Activated CD4-positive, alpha-beta T cell treated with anti-CD3 and anti-CD28 coated beads, Interleukin-2, amount 10 ng/mL, durations not matched to agents 7 days and 5 days (primary cell): ENCODE measurements at regions of chr12 and their contacts with region 1.

Region 1: GRCh38 chr12:6851921-6852650 is at the start of gene USP5:
- DNase-seq: peak; percentile 99
- H3K4me3 Mint-ChIP-seq: peak within 1 kb of the TSS; percentile 84
- H3K27ac Mint-ChIP-seq: peak within 1 kb of the TSS; percentile 100
- H3K4me1 Mint-ChIP-seq: peaks cover 48% of the 10 kb centered on the region
- H3K27me3 Mint-ChIP-seq: no peaks in the 10 kb centered on the region
- total RNA-seq, gene USP5: 119 to 131 TPM

Region 2: DNA sequence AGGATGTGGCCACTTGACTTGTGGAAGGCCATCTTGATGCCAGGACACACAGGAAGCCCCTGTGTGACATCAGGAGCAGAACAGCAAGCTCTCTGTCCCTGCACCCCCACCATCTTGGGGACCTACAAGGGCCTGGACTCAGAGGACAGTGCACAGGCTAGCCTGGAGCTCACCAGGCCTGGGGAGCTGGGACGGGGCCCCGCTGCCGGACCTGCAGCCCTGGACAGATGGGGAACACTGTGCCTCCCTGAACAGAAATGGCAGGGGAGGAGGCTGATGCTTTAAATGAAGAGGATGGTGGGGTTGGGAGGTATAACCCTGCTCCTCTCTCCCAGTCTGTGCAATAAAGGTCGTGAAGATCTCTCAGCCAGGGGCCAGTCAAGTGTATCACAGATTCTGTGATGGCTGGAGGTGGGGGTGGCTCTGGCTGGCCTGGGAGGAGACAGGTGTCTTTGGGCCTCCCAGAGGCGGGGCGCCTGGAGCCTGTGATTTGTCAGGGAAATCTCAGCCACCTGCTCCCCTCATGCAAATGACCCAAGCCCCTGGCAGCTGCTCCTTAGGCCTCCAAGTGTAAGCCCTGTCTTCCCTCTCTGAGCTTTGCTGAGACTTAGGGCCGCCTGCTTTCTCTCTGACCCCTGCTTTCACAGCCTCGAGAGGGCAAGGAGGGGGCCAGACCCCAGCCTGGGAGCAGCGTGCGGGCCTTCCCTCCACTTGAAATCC is 12.4 kb before region 1 on chr12:
- CTCF ChIA-PET with region 1: interaction called, 24 read pairs
- POLR2A ChIA-PET with region 1: interaction called, 3 read pairs
- DNase-seq: no peak
- H3K4me3 Mint-ChIP-seq: no peak overlapping the region
- H3K27ac Mint-ChIP-seq: no peak overlapping the region
- H3K4me1 Mint-ChIP-seq: peaks cover 5% of the 10 kb centered on the region
- H3K27me3 Mint-ChIP-seq: no peaks in the 10 kb centered on the region

Region 3: DNA sequence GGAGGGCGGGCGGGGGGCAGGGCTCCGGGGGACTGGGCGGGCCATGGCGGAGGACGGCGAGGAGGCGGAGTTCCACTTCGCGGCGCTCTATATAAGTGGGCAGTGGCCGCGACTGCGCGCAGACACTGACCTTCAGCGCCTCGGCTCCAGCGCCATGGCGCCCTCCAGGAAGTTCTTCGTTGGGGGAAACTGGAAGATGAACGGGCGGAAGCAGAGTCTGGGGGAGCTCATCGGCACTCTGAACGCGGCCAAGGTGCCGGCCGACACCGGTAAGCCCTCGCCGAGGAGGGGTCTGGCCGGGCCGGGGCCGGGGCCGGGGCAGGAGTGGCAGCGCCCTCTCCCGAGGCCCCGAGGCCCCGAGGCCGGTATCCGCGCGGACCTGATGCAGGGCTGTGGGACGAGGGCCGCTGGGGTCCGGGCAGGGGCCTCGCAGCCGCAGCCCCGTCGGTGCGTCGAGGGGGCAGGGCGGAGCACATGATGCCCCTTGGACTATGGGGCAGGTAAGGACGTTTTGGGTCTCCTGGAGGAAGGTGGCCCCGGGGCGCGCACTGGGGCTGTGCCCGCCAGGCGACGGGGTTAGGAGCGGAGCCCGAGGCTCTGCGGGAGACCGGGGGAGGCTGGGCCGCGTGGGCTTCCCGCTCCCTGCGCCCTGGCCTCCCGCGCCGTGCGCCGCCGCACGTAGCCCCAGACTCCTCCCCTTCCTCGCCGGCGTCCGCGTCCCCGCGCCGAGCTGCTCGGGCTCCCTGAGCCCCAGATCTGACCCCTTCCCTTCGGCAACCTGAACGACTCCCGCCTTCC is 15.5 kb after region 1 on chr12 and contains the start of gene TPI1:
- CTCF ChIA-PET with region 1: interaction called, 67 read pairs
- POLR2A ChIA-PET with region 1: interaction called, 23 read pairs
- DNase-seq: peak; percentile 76
- H3K4me3 Mint-ChIP-seq: peak within 1 kb of the TSS; percentile 93
- H3K27ac Mint-ChIP-seq: peak within 1 kb of the TSS; percentile 95
- H3K4me1 Mint-ChIP-seq: peaks cover 52% of the 10 kb centered on the region
- H3K27me3 Mint-ChIP-seq: no peaks in the 10 kb centered on the region
- total RNA-seq, gene TPI1: 918 to 1,035 TPM

Region 4: GRCh38 chr12:6937481-6938297 is 85.6 kb after region 1 on chr12:
- CTCF ChIA-PET with region 1: interaction called, 11 read pairs
- POLR2A ChIA-PET with region 1: no interaction called
- DNase-seq: peak; percentile 95
- H3K4me3 Mint-ChIP-seq: peak overlapping the region; percentile 81
- H3K27ac Mint-ChIP-seq: peak overlapping the region; percentile 97
- H3K4me1 Mint-ChIP-seq: peaks cover 59% of the 10 kb centered on the region
- H3K27me3 Mint-ChIP-seq: no peaks in the 10 kb centered on the region